Ascending aorta (tissue), 2 donors: ENCODE measurements at regions of chr2 and their contacts with region 1.

Region 1: DNA sequence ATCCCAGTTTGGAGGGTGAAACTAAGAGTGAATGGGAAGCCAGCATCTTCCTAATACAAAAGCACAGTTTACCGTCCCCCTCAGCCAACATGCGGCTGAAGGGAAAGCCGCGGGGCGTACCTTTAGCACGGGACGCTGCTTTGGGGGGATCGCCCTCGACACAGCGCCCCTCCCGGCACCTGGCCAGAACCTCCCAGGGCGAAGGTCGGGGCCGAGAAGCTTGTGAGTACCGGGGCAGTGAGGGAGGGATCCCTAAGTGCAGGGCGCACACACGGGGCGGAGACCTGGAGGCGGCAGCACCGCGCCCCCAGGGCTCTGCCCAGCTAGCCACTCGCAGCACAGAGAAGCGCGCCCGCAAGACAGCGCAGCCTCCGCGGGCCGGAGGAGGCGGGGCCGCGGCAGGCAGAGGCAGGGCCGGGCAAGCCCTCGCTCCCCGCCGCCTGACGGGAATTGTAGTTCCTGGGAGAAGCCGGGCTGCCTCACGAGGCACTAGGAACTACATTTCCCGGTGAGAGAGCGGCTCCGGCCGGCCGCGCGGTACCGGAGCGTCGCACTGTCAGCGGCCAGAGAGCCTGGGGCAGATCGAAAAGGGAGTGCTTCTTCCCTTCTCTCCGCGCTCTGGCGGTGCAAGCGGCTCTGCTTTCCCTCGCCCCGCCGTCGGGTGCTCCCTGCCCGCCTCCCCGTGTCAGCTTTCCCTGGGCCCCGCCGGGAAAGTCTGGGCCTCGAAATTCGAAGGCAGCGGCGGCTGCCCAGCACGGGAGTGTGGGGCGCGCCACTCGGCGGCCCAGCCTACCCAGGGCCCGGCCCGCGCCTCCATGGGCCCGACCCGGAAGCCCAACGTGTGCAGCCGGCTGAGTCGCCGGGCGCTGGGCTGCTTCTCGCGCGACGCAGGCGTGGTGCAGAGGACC is at the starts of genes DCAF17 and METTL8:
- DNase-seq: peak; percentile 85 to 97
- H3K4me3 ChIP-seq: peak within 1 kb of the TSS; percentile 82 to 97
- H3K27ac ChIP-seq: peak within 1 kb of the TSS; percentile 96 to 99
- H3K4me1 ChIP-seq: peaks cover 0 to 14% of the 10 kb centered on the region in 2 donors
- H3K27me3 ChIP-seq: no peaks in the 10 kb centered on the region
- CTCF ChIP-seq: peak; percentile 16 to 42 (median 26)
- total RNA-seq, gene DCAF17: 22.6 TPM
- total RNA-seq, gene METTL8: 6.7 TPM

Region 2: DNA sequence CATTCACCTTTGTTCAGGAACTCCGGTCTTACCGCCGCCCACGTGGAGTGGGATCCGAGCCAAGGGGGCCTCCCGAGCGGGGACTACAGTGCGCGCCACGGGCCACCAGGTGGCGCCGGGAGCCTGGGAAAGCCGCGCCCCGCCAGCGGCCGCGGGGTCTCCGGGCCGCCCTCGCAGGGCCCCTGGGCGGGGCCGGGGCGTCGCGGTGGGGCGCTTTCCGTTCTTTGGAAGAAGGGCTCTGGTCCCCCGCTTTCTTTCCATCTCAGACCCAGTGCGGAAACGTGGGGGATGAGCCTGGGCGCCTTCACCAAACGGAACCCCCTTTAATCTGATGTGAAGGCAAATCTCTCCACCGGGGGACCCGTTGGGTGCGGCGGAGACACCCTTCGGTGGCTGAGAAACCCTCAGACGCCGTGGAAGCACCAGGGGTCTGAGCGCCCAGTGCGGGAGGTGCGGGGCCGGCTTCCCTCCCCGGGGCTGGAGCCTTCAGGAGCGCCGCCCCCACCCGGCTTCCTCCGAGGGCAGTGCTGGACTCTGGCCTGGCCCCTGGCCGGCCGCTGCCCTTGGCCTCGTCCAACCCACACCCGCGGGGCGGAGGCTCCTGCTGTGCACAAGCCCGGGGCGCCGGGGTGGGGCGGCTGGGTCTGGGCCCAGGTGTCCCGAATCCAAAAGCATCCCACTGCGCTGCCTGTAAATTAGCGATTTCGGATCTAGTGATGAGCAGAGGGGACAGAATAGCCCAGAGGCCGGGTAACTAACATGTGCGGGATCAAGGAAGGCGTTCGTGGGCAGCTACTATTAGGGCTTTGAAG is 460.3 kb before region 1 on chr2:
- intact Hi-C with region 1: loop called (anchors 5 kb)
- DNase-seq: peak; percentile 18 to 90
- H3K4me3 ChIP-seq: peak overlapping the region; percentile 77 to 92
- H3K27ac ChIP-seq: peak overlapping the region; percentile 76 to 77
- H3K4me1 ChIP-seq: peaks cover 0 to 7% of the 10 kb centered on the region in 2 donors
- H3K27me3 ChIP-seq: no peaks in the 10 kb centered on the region
- CTCF ChIP-seq: peak; percentile 74 to 97 (median 80)

Region 3: DNA sequence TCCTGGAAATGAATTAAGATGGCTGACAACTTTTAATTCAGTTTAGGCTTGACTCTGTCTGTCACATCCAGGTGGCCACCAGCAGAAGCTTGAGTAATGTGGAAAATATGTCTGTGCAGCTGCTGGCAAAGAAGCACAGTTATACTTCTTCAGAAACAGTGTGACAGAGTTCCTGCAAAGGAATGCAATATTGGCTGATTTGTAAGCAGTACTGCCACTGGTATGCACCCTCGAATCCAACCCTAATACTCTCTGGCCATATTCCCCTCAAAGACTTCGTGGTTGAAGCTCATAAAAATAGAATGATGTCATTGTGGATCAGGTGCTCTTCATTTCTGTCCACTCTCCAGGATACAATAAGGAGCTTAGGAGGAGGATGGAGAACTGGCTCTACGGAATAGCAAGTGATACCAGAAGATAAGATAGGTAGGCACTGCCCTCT is 86.4 kb before region 1 on chr2:
- intact Hi-C with region 1: no loop called
- DNase-seq: no peak
- H3K4me3 ChIP-seq: no peak overlapping the region
- H3K27ac ChIP-seq: peak overlapping the region; percentile 44 to 51
- H3K4me1 ChIP-seq: peaks cover 0 to 4% of the 10 kb centered on the region in 2 donors
- H3K27me3 ChIP-seq: no peaks in the 10 kb centered on the region
- CTCF ChIP-seq: no peak

Region 4: GRCh38 chr2:171416009-171416926 is 17.7 kb before region 1 on chr2:
- intact Hi-C with region 1: loop called (anchors 1 kb)
- DNase-seq: peak; percentile 49 to 93
- H3K4me3 ChIP-seq: no peak overlapping the region
- H3K27ac ChIP-seq: peak overlapping the region in 1 of 2 donors; percentile 67
- H3K4me1 ChIP-seq: no peaks in the 10 kb centered on the region
- H3K27me3 ChIP-seq: no peaks in the 10 kb centered on the region
- CTCF ChIP-seq: peak; percentile 75 to 84 (median 76)

Region 5: DNA sequence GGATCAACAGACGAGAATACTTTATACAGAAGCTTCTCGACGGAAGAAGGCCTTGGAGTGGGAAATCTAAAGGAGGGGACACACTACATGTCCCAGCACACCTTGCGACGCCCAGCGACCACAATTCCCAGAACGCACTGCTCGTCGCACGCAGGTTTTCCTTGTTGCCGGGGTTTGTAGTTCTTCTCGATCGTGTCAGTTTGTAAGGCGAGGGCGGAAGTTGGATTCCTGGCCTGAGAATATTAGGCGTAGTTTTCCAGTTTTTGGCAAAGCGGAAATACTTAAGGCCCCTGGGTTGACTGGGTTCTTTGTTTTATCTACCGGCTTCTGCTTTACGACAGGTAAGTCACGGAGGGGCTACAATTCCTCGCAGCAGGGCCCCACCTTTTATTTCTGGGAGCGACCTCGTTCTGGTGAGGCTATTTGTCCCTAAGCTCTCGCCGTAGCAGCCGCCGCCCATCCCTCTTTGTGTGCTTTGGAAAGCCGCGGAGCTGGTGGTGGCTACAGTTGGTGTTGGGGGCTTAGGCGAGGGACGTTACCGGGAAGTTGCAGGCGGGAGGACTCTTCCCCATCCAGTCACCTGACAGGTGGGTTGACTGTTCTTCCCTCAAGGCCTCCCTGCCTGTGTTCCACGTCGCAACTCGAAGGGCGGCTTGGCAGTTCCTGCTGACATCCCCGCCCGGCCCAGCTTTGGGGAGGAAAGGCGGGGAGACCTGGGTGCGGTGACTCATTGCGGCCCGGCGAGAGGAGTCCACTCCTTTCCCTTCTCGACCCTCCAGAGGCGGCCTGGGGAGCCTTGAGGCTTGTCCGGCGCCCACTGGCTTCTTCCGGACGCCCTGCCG is 253.5 kb after region 1 on chr2 and contains the start of gene DYNC1I2:
- intact Hi-C with region 1: loop called (anchors 2 kb)
- DNase-seq: peak; percentile 70 to 96
- H3K4me3 ChIP-seq: peak within 1 kb of the TSS; percentile 76 to 85
- H3K27ac ChIP-seq: peak within 1 kb of the TSS; percentile 84 to 92
- H3K4me1 ChIP-seq: peaks cover 0 to 9% of the 10 kb centered on the region in 2 donors
- H3K27me3 ChIP-seq: no peaks in the 10 kb centered on the region
- CTCF ChIP-seq: no peak
- total RNA-seq, gene DYNC1I2: 81.0 TPM

Region 6: DNA sequence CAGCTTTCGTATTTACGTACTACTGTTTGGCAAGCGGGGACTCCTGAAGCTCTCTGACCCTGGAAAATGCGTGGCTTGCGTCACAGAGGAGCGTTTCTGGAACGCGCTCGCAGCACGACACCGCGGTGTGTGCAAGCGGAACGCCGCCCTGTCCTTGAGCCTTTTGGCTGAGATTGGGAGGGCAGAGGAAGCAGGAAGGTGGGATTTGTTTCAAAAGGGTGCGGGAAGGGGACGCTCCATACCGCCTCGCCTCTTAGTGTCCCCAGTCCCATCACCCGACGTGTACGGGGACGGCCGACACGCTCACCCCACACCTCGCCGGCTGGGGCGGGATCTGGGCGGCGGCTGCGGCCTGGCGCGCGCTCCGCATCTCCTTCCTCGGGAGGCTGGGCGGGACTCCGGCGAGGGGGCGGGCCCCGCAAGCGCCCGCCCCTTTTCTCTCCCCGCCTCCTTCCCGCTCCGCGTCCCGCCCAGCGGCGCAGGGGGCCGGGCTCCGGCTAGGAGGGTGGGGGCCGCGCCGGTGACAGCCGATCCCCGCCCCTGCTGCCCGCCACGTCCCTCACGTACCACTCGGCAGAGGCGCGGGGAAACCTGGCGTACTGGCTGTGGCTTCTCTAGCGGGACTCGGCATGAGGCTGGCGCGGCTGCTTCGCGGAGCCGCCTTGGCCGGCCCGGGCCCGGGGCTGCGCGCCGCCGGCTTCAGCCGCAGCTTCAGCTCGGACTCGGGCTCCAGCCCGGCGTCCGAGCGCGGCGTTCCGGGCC is 1121.7 kb after region 1 on chr2 and contains the start of gene PDK1:
- intact Hi-C with region 1: loop called (anchors 10 kb)
- DNase-seq: peak; percentile 52 to 93
- H3K4me3 ChIP-seq: peak within 1 kb of the TSS; percentile 96 to 97
- H3K27ac ChIP-seq: peak within 1 kb of the TSS; percentile 93 to 95
- H3K4me1 ChIP-seq: peaks cover 0 to 10% of the 10 kb centered on the region in 2 donors
- H3K27me3 ChIP-seq: no peaks in the 10 kb centered on the region
- CTCF ChIP-seq: no peak
- total RNA-seq, gene PDK1: 24.2 TPM